ENCODE measurements at regions of chr10 and their contacts with region 1.

Region 1: GRCh38 chr10:110429289-110429688 is 68.4 kb upstream of the DUSP5 start:
- DNase-seq: no peak
- H3K4me3 ChIP-seq: no peak overlapping the region
- H3K27ac ChIP-seq: no peak overlapping the region
- H3K4me1 ChIP-seq: peaks cover 45% of the 10 kb centered on the region
- CTCF ChIP-seq: no peak

Region 2: DNA sequence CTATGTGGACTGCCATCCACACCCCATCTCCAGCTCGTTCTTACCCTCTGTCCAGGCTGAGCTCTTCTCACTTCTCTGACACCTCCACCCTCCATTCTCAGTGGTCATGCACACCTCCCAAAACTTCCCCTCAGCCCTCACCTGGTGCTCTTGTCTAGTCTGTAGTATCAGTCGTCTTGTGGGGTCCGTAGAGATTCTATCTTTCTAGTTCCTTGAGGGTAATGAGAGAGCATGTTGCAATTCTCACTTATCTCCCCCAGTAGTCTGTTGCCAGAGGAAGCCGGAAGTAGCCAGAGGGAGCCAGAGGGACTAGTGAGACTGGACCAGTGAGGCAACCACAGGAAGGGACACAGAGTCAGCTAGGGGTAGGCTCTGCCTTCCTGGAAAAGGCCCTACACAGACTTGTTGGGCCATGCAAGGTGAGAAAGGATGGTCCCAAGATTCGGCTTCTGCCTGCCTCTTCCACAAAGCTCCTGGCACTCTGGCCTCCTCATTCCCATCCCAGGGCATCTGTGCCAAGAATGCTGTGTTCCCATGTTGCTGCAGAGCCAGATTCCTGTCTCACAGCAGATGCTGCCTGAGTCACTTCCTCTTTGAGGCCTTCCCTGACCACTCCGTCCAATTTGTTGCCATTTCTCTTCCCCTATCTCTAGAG is 17.8 kb after region 1 on chr10:
- CTCF ChIA-PET with region 1: no interaction called
- POLR2A ChIA-PET with region 1: interaction called, 13 read pairs
- intact Hi-C with region 1: no loop called
- DNase-seq: no peak
- H3K4me3 ChIP-seq: no peak overlapping the region
- H3K27ac ChIP-seq: no peak overlapping the region
- H3K4me1 ChIP-seq: peaks cover 7% of the 10 kb centered on the region
- CTCF ChIP-seq: no peak

Region 3: DNA sequence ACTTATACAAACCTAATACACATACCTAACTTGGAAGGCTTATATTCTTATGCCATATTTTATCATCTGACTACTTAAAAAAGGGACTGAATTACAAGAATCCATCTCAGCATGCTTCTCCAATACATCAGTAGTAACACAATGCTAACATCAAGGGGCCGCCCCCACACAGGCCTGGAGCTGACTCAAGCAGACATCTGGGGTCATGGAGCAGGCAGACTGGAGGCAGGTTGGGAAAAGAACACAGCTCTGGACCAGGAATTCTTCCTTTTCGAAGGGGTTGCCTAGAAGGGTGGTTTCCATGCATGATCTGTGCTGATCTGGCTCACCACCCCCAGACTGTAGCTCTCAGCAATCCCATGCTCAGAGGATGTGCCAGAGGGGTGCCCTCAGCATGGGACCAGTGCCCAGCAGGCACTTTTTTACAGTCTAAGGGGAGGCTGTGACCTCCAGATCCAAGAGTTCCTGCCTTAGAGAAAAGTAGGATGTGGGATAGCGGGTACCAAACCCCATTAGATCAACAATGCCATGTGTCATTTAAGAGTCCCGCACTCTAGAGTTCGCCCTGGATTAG is 42.4 kb after region 1 on chr10:
- CTCF ChIA-PET with region 1: no interaction called
- POLR2A ChIA-PET with region 1: no interaction called
- intact Hi-C with region 1: no loop called
- DNase-seq: no peak
- H3K4me3 ChIP-seq: no peak overlapping the region
- H3K27ac ChIP-seq: no peak overlapping the region
- H3K4me1 ChIP-seq: no peaks in the 10 kb centered on the region
- CTCF ChIP-seq: no peak